ENCODE measurements at regions of chr6 and their contacts with region 1.

Region 1: DNA sequence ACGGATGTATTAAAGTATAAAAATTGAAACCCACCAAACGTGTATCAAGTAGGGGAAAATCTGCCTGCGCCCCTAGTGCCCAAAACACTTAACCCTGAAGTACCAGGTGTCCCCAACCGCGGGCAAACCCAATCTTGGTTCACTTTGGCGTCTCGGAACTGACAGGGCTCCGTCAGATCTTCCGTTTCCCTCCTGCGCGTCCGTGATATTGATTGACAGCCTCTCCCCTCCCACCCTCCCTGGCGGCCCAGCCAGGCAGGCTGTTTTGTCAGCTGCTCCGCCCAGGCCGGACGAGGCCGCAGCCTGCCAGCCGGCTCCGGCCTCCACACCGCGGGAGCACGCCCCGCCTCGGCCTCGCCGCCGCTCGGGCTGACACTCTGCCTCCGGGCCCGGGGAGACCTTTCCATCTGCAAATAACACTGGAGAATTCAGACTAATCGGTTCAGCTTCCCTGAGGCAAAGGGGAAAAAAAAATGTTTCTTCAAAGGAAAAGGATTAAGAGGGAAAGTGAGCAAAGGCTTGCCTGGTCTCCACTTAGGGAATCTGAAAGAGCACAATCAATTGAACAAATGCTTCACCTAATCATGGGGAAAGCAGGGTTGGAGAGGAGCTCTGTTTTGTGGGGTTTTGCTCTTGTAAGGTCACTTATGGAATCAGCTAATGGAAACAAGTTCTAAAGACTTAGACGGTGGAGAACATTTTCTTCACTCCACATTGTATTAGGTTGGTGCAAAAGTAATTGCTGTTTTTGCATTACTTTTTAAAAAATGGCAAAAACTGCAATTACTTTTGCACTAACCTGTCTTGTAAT is 235.0 kb upstream of the MCHR2 start:
- DNase-seq: peak; percentile 62
- H3K4me3 ChIP-seq: peak overlapping the region; percentile 17 to 36 (median 27)
- H3K27ac ChIP-seq: peak overlapping the region; percentile 36
- H3K4me1 ChIP-seq: peaks cover 10% of the 10 kb centered on the region
- H3K27me3 ChIP-seq: no peaks in the 10 kb centered on the region
- CTCF ChIP-seq: no peak

Region 2: DNA sequence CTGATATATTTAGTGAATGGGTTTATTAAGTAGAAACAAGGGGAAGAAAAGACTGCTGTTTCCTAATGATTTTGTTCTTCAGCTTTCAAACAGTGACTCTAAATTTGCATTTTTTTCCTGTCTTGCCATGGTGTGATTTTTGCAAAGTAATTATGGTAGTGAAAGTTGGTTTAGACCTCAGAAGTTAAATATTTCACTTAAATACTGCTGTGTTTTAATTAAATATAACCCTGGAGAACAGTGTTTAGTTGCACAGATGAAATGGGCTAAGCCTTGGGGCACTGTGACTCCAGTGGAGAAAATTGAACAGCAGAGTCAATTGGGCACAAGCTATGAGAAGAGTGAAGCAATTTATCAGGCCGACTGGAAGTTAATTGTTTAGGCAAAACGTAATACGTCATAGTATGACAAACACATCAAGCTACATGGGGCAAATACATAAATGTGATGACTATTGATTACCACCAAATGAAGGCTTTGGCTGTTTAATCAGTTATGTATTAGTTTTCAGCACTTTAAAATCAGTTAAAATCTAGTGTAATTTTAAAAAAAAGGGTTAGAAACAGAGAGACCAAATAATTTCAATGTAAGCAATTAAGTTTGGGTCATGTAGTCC is 123.8 kb before region 1 on chr6:
- CTCF ChIA-PET with region 1: no interaction called
- dilution Hi-C with region 1: no loop called
- in situ Hi-C with region 1: no loop called
- intact Hi-C with region 1: no loop called
- DNase-seq: no peak
- H3K4me3 ChIP-seq: no peak overlapping the region
- H3K27ac ChIP-seq: no peak overlapping the region
- H3K4me1 ChIP-seq: no peaks in the 10 kb centered on the region
- H3K27me3 ChIP-seq: peaks cover 3% of the 10 kb centered on the region
- CTCF ChIP-seq: no peak

Region 3: DNA sequence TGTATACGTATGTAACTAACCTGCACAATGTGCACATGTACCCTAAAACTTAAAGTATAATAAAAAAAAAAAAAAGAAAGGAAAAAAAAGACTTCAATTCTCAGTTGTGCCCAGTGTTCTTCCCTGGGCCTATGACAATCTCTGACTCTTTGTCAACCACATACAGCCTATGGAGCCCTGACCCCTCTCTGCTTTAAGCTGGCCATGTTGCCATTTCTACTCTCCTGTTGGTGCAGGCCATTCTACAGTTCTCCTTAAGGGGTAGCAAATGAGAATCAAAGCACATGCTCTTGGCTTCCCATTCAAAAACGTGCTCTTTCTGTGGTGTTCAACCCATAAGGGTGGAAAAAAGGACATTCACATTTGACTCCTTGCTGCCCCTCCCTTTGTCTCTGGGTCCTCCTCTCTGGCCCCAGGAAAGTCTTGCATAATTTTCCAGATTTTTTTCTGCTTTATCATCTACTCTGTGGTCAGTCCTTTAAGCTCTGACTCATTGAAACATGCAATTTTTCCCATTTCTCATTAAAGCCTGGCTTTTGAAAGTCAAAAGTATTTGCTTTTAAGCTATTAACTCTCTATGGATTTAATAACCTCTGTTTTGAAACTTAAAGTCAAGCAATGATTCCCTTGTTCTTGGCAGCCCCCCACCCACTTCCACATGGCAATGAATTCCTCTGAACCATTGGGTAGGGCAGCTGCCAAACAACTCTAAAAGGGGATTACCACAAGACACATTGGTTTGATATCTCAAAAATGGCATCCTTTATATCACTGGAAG is 26.4 kb before region 1 on chr6:
- CTCF ChIA-PET with region 1: no interaction called
- dilution Hi-C with region 1: no loop called
- in situ Hi-C with region 1: no loop called
- intact Hi-C with region 1: no loop called
- DNase-seq: peak; percentile 90
- H3K4me3 ChIP-seq: no peak overlapping the region
- H3K27ac ChIP-seq: peak overlapping the region; percentile 96
- H3K4me1 ChIP-seq: peaks cover 17% of the 10 kb centered on the region
- H3K27me3 ChIP-seq: no peaks in the 10 kb centered on the region
- CTCF ChIP-seq: no peak

Region 4: GRCh38 chr6:100296810-100297544 is 67.9 kb after region 1 on chr6:
- CTCF ChIA-PET with region 1: no interaction called
- dilution Hi-C with region 1: no loop called
- in situ Hi-C with region 1: no loop called
- intact Hi-C with region 1: no loop called
- DNase-seq: peak; percentile 85
- H3K4me3 ChIP-seq: no peak overlapping the region
- H3K27ac ChIP-seq: peak overlapping the region; percentile 35
- H3K4me1 ChIP-seq: peaks cover 30% of the 10 kb centered on the region
- H3K27me3 ChIP-seq: no peaks in the 10 kb centered on the region
- CTCF ChIP-seq: no peak

Region 5: GRCh38 chr6:100317031-100317430 is 88.0 kb after region 1 on chr6:
- CTCF ChIA-PET with region 1: no interaction called
- dilution Hi-C with region 1: no loop called
- in situ Hi-C with region 1: no loop called
- intact Hi-C with region 1: loop called (anchors 5 kb)
- DNase-seq: no peak
- H3K4me3 ChIP-seq: no peak overlapping the region
- H3K27ac ChIP-seq: no peak overlapping the region
- H3K4me1 ChIP-seq: no peaks in the 10 kb centered on the region
- H3K27me3 ChIP-seq: no peaks in the 10 kb centered on the region
- CTCF ChIP-seq: no peak

Measured in mammary epithelial cell (primary cell).